PC-9 (cell line): ENCODE measurements at regions of chr11 and their contacts with region 1.

Region 1: GRCh38 chr11:120172054-120172911 is 34.4 kb upstream of the TRIM29 start:
- DNase-seq: peak; percentile 63 to 68
- H3K4me3 ChIP-seq: no peak overlapping the region
- H3K27ac ChIP-seq: no peak overlapping the region
- H3K4me1 ChIP-seq: no peaks in the 10 kb centered on the region
- H3K27me3 ChIP-seq: peaks cover 21% of the 10 kb centered on the region
- CTCF ChIP-seq: peak; percentile 94

Region 2: GRCh38 chr11:120108154-120108865 is 64.0 kb before region 1 on chr11:
- CTCF ChIA-PET with region 1: no interaction called
- POLR2A ChIA-PET with region 1: no interaction called
- intact Hi-C with region 1: loop called (anchors 1 kb)
- DNase-seq: peak; percentile 61 to 70
- H3K4me3 ChIP-seq: no peak overlapping the region
- H3K27ac ChIP-seq: no peak overlapping the region
- H3K4me1 ChIP-seq: no peaks in the 10 kb centered on the region
- H3K27me3 ChIP-seq: peaks cover 28% of the 10 kb centered on the region
- CTCF ChIP-seq: peak; percentile 100

Region 3: DNA sequence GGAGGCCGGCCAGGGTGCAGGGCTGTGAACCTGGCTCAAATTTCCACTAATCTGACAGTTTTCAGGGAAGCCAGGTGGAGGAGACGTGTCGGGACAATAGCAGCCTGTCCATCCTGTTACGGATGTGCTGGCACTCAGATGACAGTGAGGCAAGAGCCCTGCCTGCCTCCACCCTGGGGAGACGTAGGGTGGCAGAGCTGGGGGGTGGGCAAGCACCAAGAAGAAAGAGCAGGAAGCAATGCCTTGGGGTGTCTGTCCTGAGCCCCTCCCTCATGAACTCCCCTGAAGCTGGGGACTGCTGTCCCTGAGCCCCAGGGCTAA is 24.4 kb before region 1 on chr11:
- CTCF ChIA-PET with region 1: no interaction called
- POLR2A ChIA-PET with region 1: no interaction called
- intact Hi-C with region 1: no loop called
- DNase-seq: no peak
- H3K4me3 ChIP-seq: no peak overlapping the region
- H3K27ac ChIP-seq: no peak overlapping the region
- H3K4me1 ChIP-seq: peaks cover 11% of the 10 kb centered on the region
- H3K27me3 ChIP-seq: no peaks in the 10 kb centered on the region
- CTCF ChIP-seq: no peak

Region 4: GRCh38 chr11:120210626-120211521 is 38.6 kb after region 1 on chr11 and contains the start of gene OAF:
- CTCF ChIA-PET with region 1: no interaction called
- POLR2A ChIA-PET with region 1: no interaction called
- intact Hi-C with region 1: loop called (anchors 5 kb)
- DNase-seq: peak; percentile 77 to 85
- H3K4me3 ChIP-seq: peak within 1 kb of the TSS; percentile 99
- H3K27ac ChIP-seq: peak within 1 kb of the TSS; percentile 80
- H3K4me1 ChIP-seq: peaks cover 65% of the 10 kb centered on the region
- H3K27me3 ChIP-seq: no peaks in the 10 kb centered on the region
- CTCF ChIP-seq: peak; percentile 43; the same call in 1 of the 2 replicates
- total RNA-seq, gene OAF: 45.6 and 66.1 TPM in 2 replicates

Region 5: DNA sequence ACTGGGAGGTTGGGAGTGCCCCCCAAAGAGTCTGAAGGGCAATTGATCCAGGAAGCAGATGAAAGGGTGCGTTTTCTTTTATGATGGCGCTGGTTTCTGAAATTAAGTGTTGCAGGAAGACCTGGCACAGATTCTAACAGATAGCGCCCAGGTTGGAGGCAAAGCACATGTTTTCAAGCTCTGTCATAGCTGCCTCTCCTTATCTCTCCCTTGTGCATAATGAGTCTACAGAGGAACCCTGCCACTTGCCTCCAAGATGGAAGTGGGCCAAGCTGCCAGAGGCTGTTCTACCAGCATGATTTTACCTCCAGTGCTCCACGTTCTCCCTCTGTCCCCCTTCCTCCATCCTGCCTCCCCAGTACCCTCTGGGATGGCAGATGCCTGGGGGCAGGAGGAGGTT is 122.8 kb after region 1 on chr11:
- CTCF ChIA-PET with region 1: interaction called, 3 read pairs
- POLR2A ChIA-PET with region 1: no interaction called
- intact Hi-C with region 1: loop called (anchors 1 kb)
- DNase-seq: peak; percentile 58 to 86
- H3K4me3 ChIP-seq: no peak overlapping the region
- H3K27ac ChIP-seq: no peak overlapping the region
- H3K4me1 ChIP-seq: peaks cover 38% of the 10 kb centered on the region
- H3K27me3 ChIP-seq: no peaks in the 10 kb centered on the region
- CTCF ChIP-seq: no peak

Region 6: GRCh38 chr11:120652705-120653335 is 480.5 kb after region 1 on chr11:
- CTCF ChIA-PET with region 1: no interaction called
- POLR2A ChIA-PET with region 1: no interaction called
- intact Hi-C with region 1: no loop called
- DNase-seq: no peak
- H3K4me3 ChIP-seq: no peak overlapping the region
- H3K27ac ChIP-seq: no peak overlapping the region
- H3K4me1 ChIP-seq: no peaks in the 10 kb centered on the region
- H3K27me3 ChIP-seq: peaks cover 98% of the 10 kb centered on the region
- CTCF ChIP-seq: no peak